CD4-positive, alpha-beta memory T cell (primary cell): ENCODE measurements at regions of chr7 and their contacts with region 1.

Region 1: GRCh38 chr7:156640257-156640948 is at the start of gene RNF32:
- DNase-seq: peak; percentile 87 to 94 (median 91)
- H3K4me3 ChIP-seq: peak within 1 kb of the TSS; percentile 44 to 78
- H3K4me3 Mint-ChIP-seq: peak within 1 kb of the TSS; percentile 81 to 94 (median 92)
- H3K27ac ChIP-seq: peak within 1 kb of the TSS; percentile 80
- H3K27ac Mint-ChIP-seq: peak within 1 kb of the TSS; percentile 87 to 98 (median 96)
- H3K4me1 ChIP-seq: peaks cover 14% of the 10 kb centered on the region
- H3K4me1 Mint-ChIP-seq: peaks cover 3 to 22% (median 12%) of the 10 kb centered on the region in 4 donors
- H3K27me3 ChIP-seq: no peaks in the 10 kb centered on the region
- H3K27me3 Mint-ChIP-seq: peaks cover 0 to 3% of the 10 kb centered on the region in 2 donors
- total RNA-seq, gene RNF32: 1.3 to 2.0 TPM

Region 2: DNA sequence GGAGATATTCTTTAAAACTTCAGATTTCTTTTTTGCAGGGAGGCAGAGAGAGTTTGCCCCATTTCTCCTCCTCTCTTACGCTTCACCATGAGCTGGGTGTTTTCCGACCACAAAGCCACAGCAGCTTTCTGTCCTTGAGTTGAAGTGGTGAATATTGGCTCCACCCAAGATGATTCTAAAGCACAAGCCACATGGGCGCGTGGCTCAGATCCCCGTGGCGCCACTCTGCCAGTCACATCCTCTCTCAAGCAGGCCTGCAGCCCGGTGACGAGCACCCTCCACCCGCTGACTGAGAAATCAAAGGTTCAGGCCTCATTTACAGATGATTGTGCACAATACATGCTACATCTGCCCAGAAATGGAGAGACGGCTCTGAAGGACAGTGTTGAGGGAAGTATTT is 27.5 kb before region 1 on chr7:
- CTCF ChIA-PET with region 1: no interaction called
- POLR2A ChIA-PET with region 1: interaction called, 15 read pairs
- intact Hi-C with region 1: loop called (anchors 1 kb)
- DNase-seq: peak; percentile 77 to 89 (median 83)
- H3K4me3 ChIP-seq: no peak overlapping the region
- H3K4me3 Mint-ChIP-seq: peak overlapping the region in 7 of 8 donors; percentile 2 to 72 (median 36)
- H3K27ac ChIP-seq: no peak overlapping the region
- H3K27ac Mint-ChIP-seq: peak overlapping the region; percentile 43 to 91 (median 88)
- H3K4me1 ChIP-seq: peaks cover 30% of the 10 kb centered on the region
- H3K4me1 Mint-ChIP-seq: peaks cover 26 to 61% (median 40%) of the 10 kb centered on the region in 4 donors
- H3K27me3 ChIP-seq: peaks cover 9% of the 10 kb centered on the region
- H3K27me3 Mint-ChIP-seq: peaks cover 23 to 26% of the 10 kb centered on the region in 2 donors

Region 3: GRCh38 chr7:157138424-157139110 is 498.2 kb after region 1 on chr7 and contains the start of gene UBE3C:
- CTCF ChIA-PET with region 1: no interaction called
- POLR2A ChIA-PET with region 1: no interaction called
- intact Hi-C with region 1: loop called (anchors 2 kb)
- DNase-seq: peak; percentile 88 to 94 (median 94)
- H3K4me3 ChIP-seq: peak within 1 kb of the TSS; percentile 62 to 70
- H3K4me3 Mint-ChIP-seq: peak within 1 kb of the TSS; percentile 77 to 96 (median 88)
- H3K27ac ChIP-seq: peak within 1 kb of the TSS; percentile 79
- H3K27ac Mint-ChIP-seq: peak within 1 kb of the TSS; percentile 87 to 96 (median 92)
- H3K4me1 ChIP-seq: peaks cover 48% of the 10 kb centered on the region
- H3K4me1 Mint-ChIP-seq: peaks cover 29 to 53% (median 39%) of the 10 kb centered on the region in 4 donors
- H3K27me3 ChIP-seq: no peaks in the 10 kb centered on the region
- H3K27me3 Mint-ChIP-seq: no peaks in the 10 kb centered on the region
- total RNA-seq, gene UBE3C: 57.5 to 59.7 TPM